Mammary epithelial cell (primary cell): ENCODE measurements at regions of chr9 and their contacts with region 1.

Region 1: GRCh38 chr9:76704593-76705204 is 59.5 kb upstream of the PCA3 start:
- DNase-seq: peak; percentile 60
- H3K4me3 ChIP-seq: no peak overlapping the region
- H3K27ac ChIP-seq: no peak overlapping the region
- H3K4me1 ChIP-seq: no peaks in the 10 kb centered on the region
- H3K27me3 ChIP-seq: peaks cover 3% of the 10 kb centered on the region
- CTCF ChIP-seq: peak; percentile 52 to 61

Region 2: GRCh38 chr9:76441551-76442322 is 263.0 kb before region 1 on chr9:
- CTCF ChIA-PET with region 1: no interaction called
- dilution Hi-C with region 1: no loop called
- in situ Hi-C with region 1: loop called in 1 of 2 experiments (anchors 5 kb)
- intact Hi-C with region 1: no loop called
- DNase-seq: peak; percentile 40
- H3K4me3 ChIP-seq: no peak overlapping the region
- H3K27ac ChIP-seq: no peak overlapping the region
- H3K4me1 ChIP-seq: no peaks in the 10 kb centered on the region
- H3K27me3 ChIP-seq: no peaks in the 10 kb centered on the region
- CTCF ChIP-seq: no peak

Region 3: DNA sequence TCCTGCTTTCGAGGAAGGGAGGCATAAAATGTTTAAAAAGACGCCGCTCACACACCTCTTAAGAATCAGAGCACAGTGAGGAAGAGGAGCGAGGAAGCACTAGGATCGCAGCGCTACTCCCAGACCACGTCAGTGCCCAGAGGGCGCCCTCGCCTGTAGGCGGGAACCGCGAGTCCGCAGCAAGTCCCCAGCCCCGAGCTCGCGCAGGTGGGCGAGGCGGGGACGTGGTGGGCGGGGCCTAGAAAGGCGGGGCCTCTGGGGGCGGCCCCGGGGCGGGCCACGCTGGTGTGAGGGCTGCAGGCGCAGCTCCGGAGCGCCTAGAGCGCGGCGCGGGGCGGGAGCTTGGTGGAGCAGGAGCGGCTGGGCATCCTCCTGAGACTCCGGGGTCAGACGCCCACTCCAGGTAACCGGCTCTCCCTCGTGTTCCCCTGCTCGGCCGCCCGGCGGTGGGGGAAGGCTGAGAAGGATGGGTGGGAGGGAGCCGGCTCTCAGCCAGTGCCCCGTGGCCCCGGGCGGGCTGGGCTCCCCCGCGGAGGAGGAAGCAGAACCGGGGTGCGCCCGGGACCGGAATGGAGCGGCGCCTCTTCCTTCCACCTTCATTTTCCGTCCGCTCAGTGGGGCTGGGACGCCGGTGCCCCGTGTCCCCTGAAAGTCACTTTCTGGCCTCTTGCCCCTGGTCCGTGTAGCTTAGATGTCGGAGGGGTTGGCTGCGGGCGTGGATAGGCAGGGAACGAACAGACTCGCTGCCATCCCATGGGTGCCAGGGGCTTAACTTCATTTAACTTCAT is 245.6 kb before region 1 on chr9 and contains the start of gene GCNT1:
- CTCF ChIA-PET with region 1: no interaction called
- dilution Hi-C with region 1: loop called (anchors 25 kb)
- in situ Hi-C with region 1: loop called in 1 of 2 experiments (anchors 5 kb)
- intact Hi-C with region 1: no loop called
- DNase-seq: peak; percentile 95
- H3K4me3 ChIP-seq: peak within 1 kb of the TSS; percentile 89 to 98 (median 97)
- H3K27ac ChIP-seq: peak within 1 kb of the TSS; percentile 95
- H3K4me1 ChIP-seq: peaks cover 14% of the 10 kb centered on the region
- H3K27me3 ChIP-seq: no peaks in the 10 kb centered on the region
- CTCF ChIP-seq: peak; percentile 2 to 49
- total RNA-seq, gene GCNT1: 39.8 to 97.0 TPM

Region 4: DNA sequence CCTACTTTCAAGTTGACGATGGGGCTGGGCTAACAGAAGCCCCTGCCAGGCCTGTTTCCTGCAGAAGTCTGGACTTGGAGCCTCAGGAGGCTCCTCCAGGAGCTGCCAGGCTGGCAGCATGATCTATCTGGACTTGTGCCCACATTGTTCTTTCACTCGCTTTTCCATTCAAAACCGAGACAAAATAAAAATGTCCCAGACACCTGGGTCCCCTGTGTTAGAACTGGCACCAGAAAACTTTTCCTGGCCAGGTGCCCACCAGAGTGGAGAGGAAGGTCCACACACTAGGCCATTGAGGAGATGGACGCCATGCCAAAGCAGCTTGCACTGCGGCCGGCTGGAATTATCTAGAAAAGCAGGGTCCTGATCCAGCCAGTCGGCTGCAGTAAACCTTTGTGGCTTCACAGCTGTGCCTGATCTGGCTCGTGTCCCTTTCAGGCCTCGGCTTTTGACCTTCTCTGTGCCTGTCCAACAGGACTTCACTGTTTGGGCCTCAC is 167.5 kb before region 1 on chr9:
- CTCF ChIA-PET with region 1: no interaction called
- dilution Hi-C with region 1: no loop called
- in situ Hi-C with region 1: no loop called
- intact Hi-C with region 1: no loop called
- DNase-seq: no peak
- H3K4me3 ChIP-seq: no peak overlapping the region
- H3K27ac ChIP-seq: no peak overlapping the region
- H3K4me1 ChIP-seq: peaks cover 23% of the 10 kb centered on the region
- H3K27me3 ChIP-seq: no peaks in the 10 kb centered on the region
- CTCF ChIP-seq: no peak

Region 5: GRCh38 chr9:76651119-76651705 is 53.5 kb before region 1 on chr9:
- CTCF ChIA-PET with region 1: no interaction called
- dilution Hi-C with region 1: loop called (anchors 5 kb)
- in situ Hi-C with region 1: no loop called
- intact Hi-C with region 1: no loop called
- DNase-seq: no peak
- H3K4me3 ChIP-seq: no peak overlapping the region
- H3K27ac ChIP-seq: no peak overlapping the region
- H3K4me1 ChIP-seq: peaks cover 25% of the 10 kb centered on the region
- H3K27me3 ChIP-seq: no peaks in the 10 kb centered on the region
- CTCF ChIP-seq: no peak

Region 6: GRCh38 chr9:76667521-76667957 is 37.2 kb before region 1 on chr9:
- CTCF ChIA-PET with region 1: no interaction called
- dilution Hi-C with region 1: no loop called
- in situ Hi-C with region 1: loop called in 1 of 2 experiments (anchors 5 kb)
- intact Hi-C with region 1: loop called (anchors 1 kb)
- DNase-seq: peak; percentile 52
- H3K4me3 ChIP-seq: no peak overlapping the region
- H3K27ac ChIP-seq: no peak overlapping the region
- H3K4me1 ChIP-seq: peaks cover 8% of the 10 kb centered on the region
- H3K27me3 ChIP-seq: no peaks in the 10 kb centered on the region
- CTCF ChIP-seq: no peak